HepG2 (cell line): ENCODE measurements at regions of chr11 and their contacts with region 1.

Region 1: GRCh38 chr11:123800036-123800435 is 6.1 kb downstream of the OR6M1 start:
- DNase-seq: no peak
- ATAC-seq: no peak
- H3K4me3 ChIP-seq: no peak overlapping the region
- H3K27ac ChIP-seq: no peak overlapping the region
- H3K4me1 ChIP-seq: no peaks in the 10 kb centered on the region
- H3K27me3 ChIP-seq: no peaks in the 10 kb centered on the region
- CTCF ChIP-seq: no peak
- EP300 ChIP-seq: no peak
- POLR2A ChIP-seq: no peak
- RAD21 ChIP-seq: no peak

Region 2: DNA sequence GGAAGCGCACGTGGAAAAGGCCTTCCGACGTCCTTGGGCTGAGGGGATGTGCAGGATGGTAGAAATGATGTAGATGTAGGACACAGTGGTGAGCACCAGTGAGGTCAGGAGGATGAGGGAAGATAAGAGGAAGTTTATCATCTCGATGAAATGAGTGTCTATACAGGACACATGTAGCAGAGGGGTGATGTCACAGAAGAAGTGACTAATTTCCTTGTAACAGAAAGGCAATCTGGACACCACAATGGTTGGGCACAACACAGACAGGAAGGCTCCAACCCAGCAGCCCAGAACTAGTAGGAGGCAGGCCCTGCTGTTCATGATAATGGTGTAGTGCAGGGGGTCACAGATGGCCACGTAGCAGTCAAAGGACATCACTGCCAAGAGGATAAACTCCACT is 41.1 kb after region 1 on chr11:
- CTCF ChIA-PET with region 1: no interaction called
- POLR2A ChIA-PET with region 1: no interaction called
- in situ Hi-C with region 1: no loop called
- intact Hi-C with region 1: loop called (anchors 1 kb)
- DNase-seq: no peak
- ATAC-seq: no peak
- H3K4me3 ChIP-seq: no peak overlapping the region
- H3K27ac ChIP-seq: no peak overlapping the region
- H3K4me1 ChIP-seq: no peaks in the 10 kb centered on the region
- H3K27me3 ChIP-seq: no peaks in the 10 kb centered on the region
- CTCF ChIP-seq: no peak
- EP300 ChIP-seq: no peak
- POLR2A ChIP-seq: no peak
- RAD21 ChIP-seq: no peak

Region 3: DNA sequence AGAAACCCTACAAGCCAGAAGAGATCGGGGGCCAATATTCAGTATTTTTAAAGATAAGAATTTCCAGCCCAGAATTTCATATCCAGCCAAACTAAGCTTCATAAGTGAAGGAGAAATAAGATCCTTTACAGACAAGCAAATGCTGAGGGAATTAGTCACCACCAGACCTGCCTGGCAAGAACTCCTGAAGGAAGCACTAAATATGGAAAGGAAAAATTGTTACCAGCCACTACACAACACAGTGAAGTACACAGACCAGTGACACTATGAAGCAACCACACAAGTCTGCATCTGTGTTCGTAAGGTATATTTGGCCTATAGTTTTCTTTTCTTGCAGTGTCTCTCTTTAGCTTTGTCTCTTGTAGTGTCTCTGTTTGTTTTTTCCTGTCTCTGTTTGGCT is 56.4 kb after region 1 on chr11:
- CTCF ChIA-PET with region 1: no interaction called
- POLR2A ChIA-PET with region 1: no interaction called
- in situ Hi-C with region 1: no loop called
- intact Hi-C with region 1: no loop called
- DNase-seq: no peak
- ATAC-seq: no peak
- H3K4me3 ChIP-seq: no peak overlapping the region
- H3K27ac ChIP-seq: no peak overlapping the region
- H3K4me1 ChIP-seq: no peaks in the 10 kb centered on the region
- H3K27me3 ChIP-seq: no peaks in the 10 kb centered on the region
- CTCF ChIP-seq: no peak
- EP300 ChIP-seq: no peak
- POLR2A ChIP-seq: no peak
- RAD21 ChIP-seq: no peak

Region 4: GRCh38 chr11:123924027-123924426 is 124.0 kb after region 1 on chr11:
- CTCF ChIA-PET with region 1: no interaction called
- POLR2A ChIA-PET with region 1: no interaction called
- in situ Hi-C with region 1: no loop called
- intact Hi-C with region 1: no loop called
- DNase-seq: no peak
- ATAC-seq: no peak
- H3K4me3 ChIP-seq: no peak overlapping the region
- H3K27ac ChIP-seq: no peak overlapping the region
- H3K4me1 ChIP-seq: no peaks in the 10 kb centered on the region
- H3K27me3 ChIP-seq: no peaks in the 10 kb centered on the region
- CTCF ChIP-seq: no peak
- EP300 ChIP-seq: no peak
- POLR2A ChIP-seq: no peak
- RAD21 ChIP-seq: no peak